Activated CD8-positive, alpha-beta T cell treated with anti-CD3 and anti-CD28 coated beads, Interleukin-2, amount 10 ng/mL, durations not matched to agents 7 days and 5 days (primary cell): ENCODE measurements at regions of chr5 and their contacts with region 1.

Region 1: DNA sequence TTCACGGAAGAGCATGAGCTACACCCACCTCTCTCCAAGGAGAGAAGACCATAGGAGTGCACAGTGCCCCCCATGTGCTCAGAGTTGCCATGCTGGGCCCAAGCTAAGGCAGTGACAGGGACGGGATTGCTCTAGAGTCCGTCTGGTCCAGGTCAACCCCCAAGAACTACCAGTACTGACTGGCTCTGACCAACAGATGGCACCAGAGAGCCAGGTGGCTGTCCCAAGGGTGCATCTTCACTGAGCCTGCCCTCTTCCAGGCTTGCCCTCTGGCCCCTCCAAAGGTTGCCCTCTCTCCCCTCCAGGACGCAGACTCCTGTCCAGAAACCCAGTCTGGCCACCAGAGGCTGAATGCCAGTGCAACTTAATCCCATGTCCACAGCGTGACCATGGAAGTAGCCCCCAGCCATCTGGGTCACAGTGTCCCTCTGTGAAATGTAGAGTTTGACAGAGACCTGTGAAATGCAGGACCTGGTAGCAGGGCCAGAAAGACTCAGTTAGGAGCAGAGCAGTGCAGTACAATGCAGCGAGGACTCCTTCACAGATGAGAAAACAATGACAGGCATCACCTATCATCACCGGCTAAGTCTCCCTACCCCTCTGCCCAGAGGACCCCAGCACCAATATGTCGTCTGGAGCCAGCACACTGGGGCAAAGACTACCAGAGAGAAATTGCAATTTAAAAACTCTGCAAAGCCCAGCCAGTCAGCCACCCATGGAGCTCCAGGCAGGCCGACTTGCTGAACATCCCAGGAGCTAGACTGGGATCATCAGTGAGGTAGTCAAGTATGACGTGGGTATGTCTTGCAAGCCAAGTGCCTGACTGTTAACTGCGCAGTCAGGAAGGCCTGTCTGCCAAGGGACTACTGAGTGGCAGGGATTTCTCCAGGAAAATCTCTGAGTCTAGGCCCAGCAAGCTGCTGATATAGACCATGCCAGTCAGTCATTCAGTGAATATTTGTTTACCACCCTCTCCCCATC is 7.7 kb upstream of the SKP1 start:
- DNase-seq: peak; percentile 82
- ATAC-seq: peak; percentile 93
- H3K4me3 Mint-ChIP-seq: no peak overlapping the region
- H3K27ac Mint-ChIP-seq: no peak overlapping the region
- H3K4me1 Mint-ChIP-seq: no peaks in the 10 kb centered on the region
- H3K27me3 Mint-ChIP-seq: no peaks in the 10 kb centered on the region

Region 2: DNA sequence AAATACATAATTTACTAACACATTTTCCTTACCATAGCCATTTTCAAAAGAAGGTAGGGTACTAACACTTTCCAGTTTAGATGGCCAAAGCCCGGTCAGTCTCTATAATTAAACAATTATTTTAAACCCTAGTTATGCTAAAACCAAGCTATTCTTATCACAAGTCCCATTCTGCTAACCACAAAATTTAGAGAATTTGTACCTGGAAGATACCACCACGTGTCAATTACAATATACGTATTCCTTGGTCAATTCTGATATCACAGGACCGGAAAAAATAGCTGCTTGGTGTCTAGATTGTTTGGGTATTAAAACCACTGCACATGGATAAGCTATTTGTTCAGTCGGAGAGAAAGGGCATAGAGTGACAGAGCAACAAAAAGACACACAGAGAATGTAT is 11.2 kb after region 1 on chr5:
- CTCF ChIA-PET with region 1: interaction called, 26 read pairs
- POLR2A ChIA-PET with region 1: no interaction called
- DNase-seq: no peak
- ATAC-seq: no peak
- H3K4me3 Mint-ChIP-seq: no peak overlapping the region
- H3K27ac Mint-ChIP-seq: no peak overlapping the region
- H3K4me1 Mint-ChIP-seq: no peaks in the 10 kb centered on the region
- H3K27me3 Mint-ChIP-seq: no peaks in the 10 kb centered on the region

Region 3: DNA sequence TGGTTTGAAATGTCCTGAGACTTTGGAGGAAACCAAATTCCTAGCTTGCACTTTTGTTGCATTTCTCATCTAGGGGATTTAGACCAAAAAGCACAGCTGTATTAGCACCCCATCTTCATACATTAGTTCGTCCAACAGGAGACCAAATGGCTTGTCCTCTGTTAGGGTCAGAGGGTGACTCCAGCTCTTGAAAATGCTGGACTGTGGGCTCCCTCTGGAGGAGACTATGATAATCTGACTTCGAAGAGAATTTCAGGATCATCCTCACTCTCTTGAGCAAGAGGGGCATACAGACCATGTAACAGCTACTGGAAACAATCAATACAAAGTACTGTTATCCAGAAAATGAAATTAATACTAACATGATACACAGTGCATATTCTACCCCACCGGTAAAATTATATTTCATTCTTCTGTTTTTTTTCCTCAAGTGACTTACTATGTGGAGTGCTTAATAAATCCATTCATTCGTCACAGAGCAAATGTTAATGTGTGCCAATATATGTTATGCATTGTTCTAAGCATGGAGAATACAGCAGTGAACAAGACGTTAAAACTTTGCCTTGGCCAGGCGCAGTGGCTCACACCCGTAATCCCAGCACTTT is 105.2 kb after region 1 on chr5:
- CTCF ChIA-PET with region 1: interaction called, 17 read pairs
- POLR2A ChIA-PET with region 1: interaction called, 4 read pairs
- DNase-seq: peak; percentile 42
- ATAC-seq: peak; percentile 79
- H3K4me3 Mint-ChIP-seq: no peak overlapping the region
- H3K27ac Mint-ChIP-seq: no peak overlapping the region
- H3K4me1 Mint-ChIP-seq: peaks cover 6% of the 10 kb centered on the region
- H3K27me3 Mint-ChIP-seq: peaks cover 15% of the 10 kb centered on the region